ENCODE measurements at regions of chr4 and their contacts with region 1.

Region 1: DNA sequence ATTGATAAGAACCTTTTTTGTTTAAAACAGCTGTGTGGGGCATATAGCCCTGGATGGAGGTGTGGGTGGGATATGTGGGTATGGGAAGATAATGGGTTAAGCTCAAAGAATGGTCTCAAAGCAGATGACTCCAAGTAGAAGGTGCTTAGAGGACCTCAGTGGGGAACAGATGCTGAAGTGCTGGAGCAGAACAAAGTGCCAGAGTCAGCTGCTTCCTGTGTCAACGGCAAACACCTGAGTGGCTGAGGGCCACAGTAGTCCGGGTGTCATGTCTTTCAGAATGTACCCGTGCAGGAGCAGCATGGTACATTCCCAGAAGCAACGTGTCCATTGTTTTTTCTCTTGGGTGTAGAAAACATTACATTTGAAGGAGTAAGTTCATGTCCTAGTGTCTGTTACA is 210.6 kb downstream of the CCNG2 start:
- DNase-seq: no peak
- ATAC-seq: no peak
- H3K4me3 ChIP-seq: no peak overlapping the region
- H3K27ac ChIP-seq: no peak overlapping the region
- H3K4me1 ChIP-seq: no peaks in the 10 kb centered on the region
- H3K27me3 ChIP-seq: peaks cover 30% of the 10 kb centered on the region
- CTCF ChIP-seq: no peak

Region 2: DNA sequence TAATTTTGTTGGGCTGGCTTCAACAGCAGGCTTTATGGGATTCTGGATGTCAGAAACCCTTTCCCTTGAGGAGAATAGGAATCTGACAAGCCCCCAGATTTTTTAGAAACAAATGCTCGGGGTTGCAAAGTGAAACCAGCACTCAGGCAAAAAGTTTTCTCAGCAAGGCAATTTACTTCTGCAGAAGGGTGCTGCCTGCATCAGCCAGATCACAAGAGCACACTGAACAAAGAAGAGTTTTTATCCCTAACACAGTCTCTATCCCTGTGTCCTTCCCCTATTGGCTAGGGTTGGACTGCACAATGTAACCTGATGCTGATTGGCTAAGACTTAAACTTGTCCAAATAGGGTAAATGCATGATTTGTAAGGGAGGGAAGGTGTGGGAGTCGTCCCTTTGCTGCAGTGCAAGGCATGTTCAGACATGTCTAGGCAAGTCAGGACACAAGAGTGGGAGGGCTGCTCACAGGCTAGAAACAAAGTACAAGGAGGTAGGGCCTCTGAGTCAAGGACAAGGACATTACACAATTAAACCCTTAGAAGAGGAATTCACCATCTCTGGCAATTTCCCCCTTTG is 34.9 kb before region 1 on chr4:
- CTCF ChIA-PET with region 1: no interaction called
- POLR2A ChIA-PET with region 1: no interaction called
- intact Hi-C with region 1: no loop called
- DNase-seq: no peak
- ATAC-seq: no peak
- H3K4me3 ChIP-seq: no peak overlapping the region
- H3K27ac ChIP-seq: no peak overlapping the region
- H3K4me1 ChIP-seq: no peaks in the 10 kb centered on the region
- H3K27me3 ChIP-seq: no peaks in the 10 kb centered on the region
- CTCF ChIP-seq: no peak

Region 3: DNA sequence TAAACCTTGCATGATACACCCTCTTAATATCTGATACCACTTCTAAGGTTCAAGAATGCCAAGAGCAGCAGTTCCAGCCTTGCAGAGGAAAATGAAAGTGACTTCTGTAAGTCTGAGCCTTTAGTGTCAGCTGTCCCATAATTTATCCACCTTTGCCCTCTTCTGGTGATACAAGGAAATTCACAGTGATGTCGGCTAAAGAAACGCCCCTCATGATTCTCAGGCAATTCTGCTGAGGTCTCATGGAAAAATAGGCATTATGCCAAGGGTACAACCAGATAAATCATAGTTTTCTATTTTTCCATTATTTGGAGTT is 65.7 kb after region 1 on chr4:
- CTCF ChIA-PET with region 1: no interaction called
- POLR2A ChIA-PET with region 1: no interaction called
- intact Hi-C with region 1: loop called (anchors 5 kb)
- DNase-seq: peak; percentile 62
- ATAC-seq: peak; percentile 66
- H3K4me3 ChIP-seq: no peak overlapping the region
- H3K27ac ChIP-seq: no peak overlapping the region
- H3K4me1 ChIP-seq: no peaks in the 10 kb centered on the region
- H3K27me3 ChIP-seq: peaks cover 7% of the 10 kb centered on the region; the same call in 1 of the 2 replicates
- CTCF ChIP-seq: peak; percentile 56

Measured in PC-3 (cell line).